Sciatic nerve (tissue), 2 donors: ENCODE measurements at regions of chr2 and their contacts with region 1.

Region 1: DNA sequence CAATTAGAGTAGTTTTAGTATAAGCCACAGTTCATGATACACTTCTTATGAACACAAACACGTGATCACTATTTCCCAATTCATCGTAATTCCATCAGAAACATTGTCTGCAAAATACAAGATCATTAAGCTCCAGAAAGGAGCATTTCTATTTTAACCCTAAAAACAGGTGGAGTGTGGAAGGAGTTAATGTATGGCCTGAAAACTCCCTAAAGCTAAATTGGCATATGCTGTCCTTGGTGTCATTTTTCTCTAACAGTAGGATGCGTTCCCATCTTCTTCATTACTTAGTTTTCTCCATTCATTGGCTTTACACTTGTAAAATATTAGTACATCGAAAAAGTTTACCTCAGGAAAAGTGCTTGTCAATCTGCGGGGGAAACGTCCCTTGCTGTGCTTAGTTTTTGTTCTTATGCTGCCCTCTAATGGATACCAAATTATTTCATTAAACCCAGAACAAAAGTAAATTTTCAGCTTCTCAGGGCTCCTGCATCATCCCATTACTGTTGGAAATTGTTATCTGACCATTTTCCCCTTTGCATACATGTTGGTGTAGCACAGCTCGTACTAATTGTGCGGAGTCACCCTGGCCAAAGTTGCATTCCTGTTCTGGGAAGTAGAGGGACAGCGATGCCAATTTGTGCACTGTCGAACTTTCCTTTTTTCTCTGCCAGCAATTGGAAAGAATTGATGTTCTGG is 153.4 kb downstream of the GPD2 start:
- DNase-seq: no peak
- ATAC-seq: peak; percentile 84

Region 2: DNA sequence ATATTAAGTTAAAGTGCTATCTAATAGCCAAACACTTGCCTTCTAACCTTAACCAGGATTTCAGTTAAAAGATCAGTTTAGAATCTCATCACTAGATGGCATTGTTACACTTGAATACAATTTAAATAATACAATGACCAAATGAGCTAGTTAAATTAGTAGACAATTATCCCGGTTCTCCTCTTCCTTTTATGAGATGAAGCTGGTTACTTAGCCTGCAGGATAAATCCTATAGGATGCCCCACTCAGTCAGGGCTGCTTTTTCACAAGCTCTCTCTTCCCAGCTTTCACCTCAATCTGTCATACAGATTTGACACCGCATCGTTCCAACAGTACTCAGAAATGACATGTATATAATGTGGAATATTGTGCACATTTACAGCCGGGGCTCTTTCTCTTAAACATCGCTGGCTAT is 1212.3 kb before region 1 on chr2:
- intact Hi-C with region 1: loop called (anchors 10 kb)
- DNase-seq: no peak
- ATAC-seq: peak; percentile 45

Region 3: GRCh38 chr2:156863063-156863462 is 273.5 kb after region 1 on chr2:
- intact Hi-C with region 1: no loop called
- DNase-seq: no peak
- ATAC-seq: no peak